ENCODE measurements at regions of chr9 and their contacts with region 1.

Region 1: GRCh38 chr9:87516222-87516925 is 18.7 kb downstream of the DAPK1 start:
- DNase-seq: peak; percentile 87 to 95 (median 92)
- H3K4me3 ChIP-seq: peak overlapping the region in 2 of 7 experiments; percentile 20 to 35
- H3K27ac ChIP-seq: peak overlapping the region; percentile 62 to 79
- H3K4me1 ChIP-seq: peaks cover 44 to 95% (median 83%) of the 10 kb centered on the region in 4 experiments
- H3K27me3 ChIP-seq: no peaks in the 10 kb centered on the region

Region 2: DNA sequence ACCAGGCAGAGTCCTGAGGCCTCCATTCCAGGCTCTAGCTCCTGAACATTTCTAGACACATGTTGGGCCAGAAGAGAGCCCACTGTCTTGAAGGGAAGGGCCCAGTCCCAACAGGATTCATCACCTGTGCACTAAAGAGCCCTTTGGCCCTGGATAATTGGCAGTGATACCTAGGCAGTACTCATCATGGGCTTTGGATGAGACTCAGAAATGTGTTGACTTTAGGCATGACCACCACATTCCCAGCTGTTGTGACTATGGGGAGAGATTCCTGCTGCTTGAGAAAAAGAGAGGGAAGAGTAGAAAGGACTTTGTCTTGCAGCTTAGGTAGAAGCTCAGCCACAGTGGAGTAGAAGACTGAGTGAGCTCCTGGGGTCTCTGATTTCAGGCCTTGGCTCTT is 157.1 kb before region 1 on chr9:
- CTCF ChIA-PET with region 1: no interaction called
- POLR2A ChIA-PET with region 1: no interaction called
- DNase-seq: no peak
- H3K4me3 ChIP-seq: no peak overlapping the region
- H3K27ac ChIP-seq: no peak overlapping the region
- H3K4me1 ChIP-seq: no peaks in the 10 kb centered on the region
- H3K27me3 ChIP-seq: no peaks in the 10 kb centered on the region

Region 3: GRCh38 chr9:87405677-87406542 is 110.5 kb before region 1 on chr9:
- CTCF ChIA-PET with region 1: no interaction called
- POLR2A ChIA-PET with region 1: no interaction called
- DNase-seq: peak in 1 of 3 donors; percentile 10
- H3K4me3 ChIP-seq: no peak overlapping the region
- H3K27ac ChIP-seq: no peak overlapping the region
- H3K4me1 ChIP-seq: peaks cover 0 to 4% (median 2%) of the 10 kb centered on the region in 4 experiments
- H3K27me3 ChIP-seq: no peaks in the 10 kb centered on the region

Region 4: GRCh38 chr9:87461256-87461655 is 55.1 kb before region 1 on chr9:
- CTCF ChIA-PET with region 1: no interaction called
- POLR2A ChIA-PET with region 1: no interaction called
- DNase-seq: no peak
- H3K4me3 ChIP-seq: no peak overlapping the region
- H3K27ac ChIP-seq: no peak overlapping the region
- H3K4me1 ChIP-seq: peaks cover 0 to 20% (median 6%) of the 10 kb centered on the region in 4 experiments
- H3K27me3 ChIP-seq: no peaks in the 10 kb centered on the region

Region 5: GRCh38 chr9:87502436-87503221 is 13.7 kb before region 1 on chr9:
- CTCF ChIA-PET with region 1: interaction called, 11 read pairs
- POLR2A ChIA-PET with region 1: interaction called, 4 read pairs
- DNase-seq: peak in 1 of 3 donors; percentile 45
- H3K4me3 ChIP-seq: peak overlapping the region in 6 of 7 experiments; percentile 16 to 98 (median 49)
- H3K27ac ChIP-seq: peak overlapping the region; percentile 15 to 63
- H3K4me1 ChIP-seq: peaks cover 43 to 83% (median 60%) of the 10 kb centered on the region in 4 experiments
- H3K27me3 ChIP-seq: no peaks in the 10 kb centered on the region

Measured in common myeloid progenitor, CD34-positive (primary cell).